RWPE1 (cell line): ENCODE measurements at regions of chr1 and their contacts with region 1.

Region 1: GRCh38 chr1:202315576-202316168 is 26.1 kb downstream of the UBE2T start:
- DNase-seq: peak; percentile 92
- H3K27ac ChIP-seq: no peak overlapping the region
- CTCF ChIP-seq: peak; percentile 97

Region 2: GRCh38 chr1:202184750-202185460 is 130.8 kb before region 1 on chr1:
- CTCF ChIA-PET with region 1: interaction called, 46 read pairs
- POLR2A ChIA-PET with region 1: no interaction called
- DNase-seq: peak; percentile 93
- H3K27ac ChIP-seq: no peak overlapping the region
- CTCF ChIP-seq: peak; percentile 85

Region 3: GRCh38 chr1:202200112-202200566 is 115.5 kb before region 1 on chr1:
- CTCF ChIA-PET with region 1: interaction called, 52 read pairs
- POLR2A ChIA-PET with region 1: no interaction called
- DNase-seq: peak; percentile 92
- H3K27ac ChIP-seq: peak overlapping the region; percentile 94
- CTCF ChIP-seq: no peak

Region 4: GRCh38 chr1:202210385-202210784 is 105.3 kb before region 1 on chr1:
- CTCF ChIA-PET with region 1: interaction called, 12 read pairs
- POLR2A ChIA-PET with region 1: no interaction called
- DNase-seq: no peak
- H3K27ac ChIP-seq: peak overlapping the region; percentile 19; the same call in 1 of the 2 replicates
- CTCF ChIP-seq: peak; percentile 44

Region 5: GRCh38 chr1:202241376-202242079 is 74.1 kb before region 1 on chr1:
- CTCF ChIA-PET with region 1: interaction called, 10 read pairs
- POLR2A ChIA-PET with region 1: no interaction called
- DNase-seq: peak; percentile 76
- H3K27ac ChIP-seq: peak overlapping the region; percentile 76
- CTCF ChIP-seq: no peak

Region 6: GRCh38 chr1:202283379-202283844 is 32.3 kb before region 1 on chr1:
- CTCF ChIA-PET with region 1: interaction called, 13 read pairs
- POLR2A ChIA-PET with region 1: no interaction called
- DNase-seq: peak; percentile 100
- H3K27ac ChIP-seq: peak overlapping the region; percentile 95
- CTCF ChIP-seq: no peak